MCF 10A (cell line): ENCODE measurements at regions of chr4 and their contacts with region 1.

Region 1: GRCh38 chr4:57442831-57443291 is 332.7 kb upstream of the IGFBP7 start:
- DNase-seq: peak; percentile 70
- H3K4me3 Mint-ChIP-seq: no peak overlapping the region
- H3K27ac Mint-ChIP-seq: no peak overlapping the region
- H3K4me1 Mint-ChIP-seq: no peaks in the 10 kb centered on the region
- H3K27me3 Mint-ChIP-seq: no peaks in the 10 kb centered on the region
- CTCF ChIP-seq: peak; percentile 91

Region 2: DNA sequence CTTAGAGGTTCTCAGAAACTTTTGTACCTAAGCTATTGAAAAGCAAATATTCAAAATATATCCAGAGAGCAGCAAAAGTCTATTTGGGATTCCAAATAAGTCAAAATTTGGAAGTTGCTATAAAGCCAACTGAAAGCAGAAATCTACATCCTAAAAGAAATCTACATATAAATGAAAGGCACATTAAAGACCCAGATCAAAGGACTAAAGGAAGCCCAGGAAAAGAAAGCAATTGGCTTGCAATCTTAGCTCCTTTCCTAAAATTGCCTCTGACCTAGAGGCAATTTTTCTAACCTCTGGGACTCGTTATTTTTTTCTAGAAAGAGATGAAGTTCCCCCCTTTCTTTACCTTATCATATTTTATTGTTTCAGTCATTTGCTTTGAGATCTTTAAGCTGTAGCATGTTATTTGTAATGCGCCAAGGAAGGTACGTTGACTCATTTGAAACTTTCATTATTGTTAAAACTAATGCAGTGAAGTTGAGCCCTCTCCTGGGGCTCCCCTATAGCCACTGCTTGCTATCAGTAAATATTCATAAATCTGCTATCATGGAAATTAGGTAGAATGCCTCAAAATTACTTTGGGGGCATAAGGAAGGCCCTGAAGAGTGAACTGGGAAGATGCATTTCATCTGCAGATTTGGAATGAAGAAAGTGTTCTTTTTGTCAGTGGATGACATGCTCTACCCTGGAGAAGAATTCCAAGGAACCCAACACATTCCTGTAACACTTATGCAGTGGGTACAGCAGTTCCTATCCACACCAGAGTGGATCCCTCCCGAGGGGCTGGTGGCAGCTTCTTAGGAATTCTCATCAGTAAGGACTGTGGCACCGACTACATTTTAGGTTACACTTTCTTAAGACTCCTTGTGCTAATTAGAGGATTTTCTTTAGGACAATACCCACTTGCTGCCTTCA is 154.9 kb before region 1 on chr4:
- CTCF ChIA-PET with region 1: no interaction called
- POLR2A ChIA-PET with region 1: no interaction called
- intact Hi-C with region 1: no loop called
- DNase-seq: no peak
- H3K4me3 Mint-ChIP-seq: no peak overlapping the region
- H3K27ac Mint-ChIP-seq: no peak overlapping the region
- H3K4me1 Mint-ChIP-seq: peaks cover 9% of the 10 kb centered on the region
- H3K27me3 Mint-ChIP-seq: no peaks in the 10 kb centered on the region
- CTCF ChIP-seq: no peak

Region 3: DNA sequence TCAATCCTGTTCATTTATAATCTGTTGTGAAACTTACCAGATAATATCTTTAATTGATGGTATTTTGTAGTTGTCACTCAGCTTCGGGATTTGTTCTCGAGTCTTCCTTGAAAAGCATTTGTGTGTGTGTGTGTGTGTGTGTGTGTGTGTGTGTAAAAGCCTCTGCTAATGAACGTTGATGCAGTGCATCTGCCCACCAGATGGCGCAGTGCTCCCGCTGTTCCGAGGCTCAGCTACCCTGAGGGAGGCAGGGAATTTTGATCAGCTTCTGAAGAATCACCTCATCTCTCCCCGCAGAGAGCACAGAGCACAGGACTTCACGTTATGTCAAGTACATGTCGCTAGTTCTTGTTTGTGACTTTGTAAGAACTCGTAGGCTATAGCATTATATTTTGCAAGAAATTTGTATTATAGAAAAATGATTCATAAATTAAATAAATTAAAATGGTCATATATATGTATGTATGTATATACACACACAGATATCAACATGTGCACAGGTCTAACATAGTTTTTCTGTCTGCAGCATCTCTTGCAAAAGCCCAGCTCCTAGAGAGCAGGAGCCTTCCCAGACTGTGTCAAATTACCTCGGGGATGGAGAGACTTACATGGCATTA is 16.0 kb before region 1 on chr4:
- CTCF ChIA-PET with region 1: interaction called, 55 read pairs
- POLR2A ChIA-PET with region 1: interaction called, 3 read pairs
- intact Hi-C with region 1: no loop called
- DNase-seq: peak; percentile 78
- H3K4me3 Mint-ChIP-seq: no peak overlapping the region
- H3K27ac Mint-ChIP-seq: no peak overlapping the region
- H3K4me1 Mint-ChIP-seq: peaks cover 20% of the 10 kb centered on the region
- H3K27me3 Mint-ChIP-seq: no peaks in the 10 kb centered on the region
- CTCF ChIP-seq: peak; percentile 61

Region 4: GRCh38 chr4:57575426-57575825 is 132.6 kb after region 1 on chr4:
- CTCF ChIA-PET with region 1: no interaction called
- POLR2A ChIA-PET with region 1: no interaction called
- intact Hi-C with region 1: loop called (anchors 10 kb)
- DNase-seq: no peak
- H3K4me3 Mint-ChIP-seq: no peak overlapping the region
- H3K27ac Mint-ChIP-seq: no peak overlapping the region
- H3K4me1 Mint-ChIP-seq: no peaks in the 10 kb centered on the region
- H3K27me3 Mint-ChIP-seq: no peaks in the 10 kb centered on the region
- CTCF ChIP-seq: no peak

Region 5: GRCh38 chr4:57591073-57591472 is 148.2 kb after region 1 on chr4:
- CTCF ChIA-PET with region 1: no interaction called
- POLR2A ChIA-PET with region 1: no interaction called
- intact Hi-C with region 1: no loop called
- DNase-seq: no peak
- H3K4me3 Mint-ChIP-seq: no peak overlapping the region
- H3K27ac Mint-ChIP-seq: no peak overlapping the region
- H3K4me1 Mint-ChIP-seq: no peaks in the 10 kb centered on the region
- H3K27me3 Mint-ChIP-seq: no peaks in the 10 kb centered on the region
- CTCF ChIP-seq: no peak

Region 6: GRCh38 chr4:57740625-57741190 is 297.8 kb after region 1 on chr4:
- CTCF ChIA-PET with region 1: no interaction called
- POLR2A ChIA-PET with region 1: no interaction called
- intact Hi-C with region 1: no loop called
- DNase-seq: no peak
- H3K4me3 Mint-ChIP-seq: no peak overlapping the region
- H3K27ac Mint-ChIP-seq: no peak overlapping the region
- H3K4me1 Mint-ChIP-seq: peaks cover 5% of the 10 kb centered on the region
- H3K27me3 Mint-ChIP-seq: no peaks in the 10 kb centered on the region
- CTCF ChIP-seq: no peak

Region 7: DNA sequence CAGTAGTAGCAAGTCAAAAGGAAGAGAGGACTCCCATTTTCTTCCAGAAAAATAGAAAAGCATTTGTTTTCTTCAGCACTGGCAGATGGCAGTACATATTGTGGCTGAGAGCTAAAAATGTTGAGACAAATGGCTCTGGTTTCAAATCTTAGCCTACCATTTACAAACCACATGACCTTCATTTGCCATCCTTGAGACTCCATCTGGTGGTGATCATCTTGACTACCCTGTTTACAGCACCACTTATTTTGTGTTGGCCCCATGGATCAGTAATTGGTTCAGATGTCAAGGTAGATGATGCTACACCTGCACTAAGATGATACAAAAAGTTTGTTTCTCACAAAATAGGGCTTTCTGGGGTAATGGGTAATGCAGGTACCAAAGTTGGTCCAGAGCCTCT is 619.1 kb after region 1 on chr4:
- CTCF ChIA-PET with region 1: interaction called, 10 read pairs
- POLR2A ChIA-PET with region 1: no interaction called
- intact Hi-C with region 1: loop called (anchors 1 kb)
- DNase-seq: peak; percentile 22
- H3K4me3 Mint-ChIP-seq: no peak overlapping the region
- H3K27ac Mint-ChIP-seq: no peak overlapping the region
- H3K4me1 Mint-ChIP-seq: no peaks in the 10 kb centered on the region
- H3K27me3 Mint-ChIP-seq: no peaks in the 10 kb centered on the region
- CTCF ChIP-seq: peak; percentile 22

Region 8: GRCh38 chr4:58225460-58225859 is 782.6 kb after region 1 on chr4:
- CTCF ChIA-PET with region 1: interaction called, 3 read pairs
- POLR2A ChIA-PET with region 1: no interaction called
- intact Hi-C with region 1: loop called (anchors 5 kb)
- DNase-seq: no peak
- H3K4me3 Mint-ChIP-seq: no peak overlapping the region
- H3K27ac Mint-ChIP-seq: no peak overlapping the region
- H3K4me1 Mint-ChIP-seq: no peaks in the 10 kb centered on the region
- H3K27me3 Mint-ChIP-seq: no peaks in the 10 kb centered on the region
- CTCF ChIP-seq: no peak

Region 9: DNA sequence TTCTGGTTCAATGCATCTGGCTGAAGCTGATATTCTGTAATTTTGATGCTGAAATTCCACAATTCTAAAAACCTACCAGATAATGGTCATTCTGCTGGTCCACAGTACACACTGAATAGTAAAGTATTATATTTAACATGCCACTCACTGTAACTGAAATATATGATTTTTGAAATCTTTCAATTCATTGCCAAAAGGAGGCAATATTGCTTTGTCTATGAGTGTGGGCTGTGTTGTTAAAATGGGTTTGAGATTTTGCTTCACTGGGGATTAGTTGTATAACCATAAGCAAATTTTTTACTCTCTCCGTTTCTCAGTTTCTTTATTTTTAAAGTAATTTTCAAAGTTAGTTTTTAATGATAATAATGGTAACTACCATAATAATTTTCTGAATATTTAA is 1071.4 kb after region 1 on chr4:
- CTCF ChIA-PET with region 1: no interaction called
- POLR2A ChIA-PET with region 1: no interaction called
- intact Hi-C with region 1: loop called (anchors 5 kb)
- DNase-seq: peak; percentile 16
- H3K4me3 Mint-ChIP-seq: no peak overlapping the region
- H3K27ac Mint-ChIP-seq: no peak overlapping the region
- H3K4me1 Mint-ChIP-seq: peaks cover 7% of the 10 kb centered on the region
- H3K27me3 Mint-ChIP-seq: no peaks in the 10 kb centered on the region
- CTCF ChIP-seq: no peak